MCF 10A (cell line): ENCODE measurements at regions of chr1 and their contacts with region 1.

Region 1: DNA sequence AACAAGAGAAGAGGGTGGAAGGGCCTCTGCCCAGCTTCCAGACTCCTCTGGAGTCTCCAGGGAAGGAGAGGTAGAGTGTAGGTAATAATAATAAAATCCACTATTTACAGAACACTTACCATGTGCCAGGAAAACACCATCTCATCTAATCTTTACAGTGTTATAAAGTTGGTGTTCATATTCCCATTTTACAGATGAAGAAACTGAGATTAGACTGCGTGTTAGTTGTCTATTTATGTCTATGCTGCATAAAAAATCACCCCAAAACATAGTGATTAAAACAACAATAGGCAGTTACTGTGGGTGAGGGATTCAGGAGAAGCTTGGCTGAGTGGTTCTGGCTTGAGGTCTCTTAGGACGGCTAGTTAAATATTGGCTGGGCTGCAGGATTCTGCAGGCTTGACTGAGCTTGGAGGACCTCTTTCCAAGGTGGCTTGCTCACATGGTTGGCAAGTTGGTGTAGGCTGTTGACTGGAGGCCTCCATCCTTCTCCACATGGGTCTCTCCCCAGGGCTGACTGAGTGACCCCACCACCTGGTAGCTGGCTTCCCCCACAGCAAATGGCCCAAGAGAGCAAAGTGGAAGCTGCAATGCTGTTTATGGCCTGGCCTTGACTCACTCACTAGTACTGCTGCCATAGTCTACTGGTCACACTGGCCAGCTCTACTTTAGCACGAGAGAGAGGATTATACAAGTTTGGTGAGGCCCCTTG is 6.5 kb upstream of the ALX3 start:
- DNase-seq: no peak
- H3K4me3 Mint-ChIP-seq: no peak overlapping the region
- H3K27ac Mint-ChIP-seq: no peak overlapping the region
- H3K4me1 Mint-ChIP-seq: no peaks in the 10 kb centered on the region
- H3K27me3 Mint-ChIP-seq: no peaks in the 10 kb centered on the region
- CTCF ChIP-seq: no peak

Region 2: GRCh38 chr1:109816175-109816811 is 260.7 kb before region 1 on chr1:
- CTCF ChIA-PET with region 1: no interaction called
- POLR2A ChIA-PET with region 1: no interaction called
- intact Hi-C with region 1: no loop called
- DNase-seq: no peak
- H3K4me3 Mint-ChIP-seq: no peak overlapping the region
- H3K27ac Mint-ChIP-seq: no peak overlapping the region
- H3K4me1 Mint-ChIP-seq: peaks cover 7% of the 10 kb centered on the region
- H3K27me3 Mint-ChIP-seq: no peaks in the 10 kb centered on the region
- CTCF ChIP-seq: no peak

Region 3: DNA sequence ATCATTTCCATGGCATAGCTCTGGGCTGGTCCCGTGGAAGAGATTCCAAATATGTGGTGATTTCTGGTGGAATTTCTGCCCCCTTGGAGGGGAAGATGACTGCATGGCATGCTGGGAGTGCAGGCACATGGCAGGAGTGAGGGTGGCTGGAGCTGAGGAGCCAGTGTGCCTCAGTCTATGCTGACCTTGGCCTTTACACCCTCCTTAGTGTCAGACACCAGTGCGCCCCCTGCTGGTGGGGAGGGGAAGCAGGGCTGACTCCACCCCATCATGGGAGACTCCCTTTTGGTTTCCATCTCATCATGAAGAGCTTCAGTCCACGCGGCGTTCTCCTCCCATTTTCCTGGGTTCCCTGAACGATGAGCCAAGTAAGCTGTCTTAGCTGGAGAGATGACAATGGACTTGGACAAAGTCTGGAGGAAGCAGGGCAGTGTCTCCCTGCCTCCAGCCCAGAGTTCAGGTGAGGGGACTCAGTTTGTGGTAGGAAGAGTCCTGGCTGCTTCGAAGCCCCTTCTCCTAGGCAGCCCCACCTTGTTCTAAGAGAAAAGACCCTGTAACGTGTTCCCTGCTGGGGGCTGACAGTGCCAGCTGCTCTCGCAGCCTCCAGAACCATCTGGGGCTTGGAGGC is 16.8 kb before region 1 on chr1:
- CTCF ChIA-PET with region 1: interaction called, 21 read pairs
- POLR2A ChIA-PET with region 1: no interaction called
- intact Hi-C with region 1: no loop called
- DNase-seq: peak; percentile 59
- H3K4me3 Mint-ChIP-seq: no peak overlapping the region
- H3K27ac Mint-ChIP-seq: no peak overlapping the region
- H3K4me1 Mint-ChIP-seq: no peaks in the 10 kb centered on the region
- H3K27me3 Mint-ChIP-seq: no peaks in the 10 kb centered on the region
- CTCF ChIP-seq: peak; percentile 82